Activated CD4-positive, alpha-beta T cell treated with anti-CD3 and anti-CD28 coated beads, Interleukin-2, amount 10 ng/mL, durations not matched to agents 24 days and 14 days (primary cell): ENCODE measurements at regions of chr1 and their contacts with region 1.

Region 1: DNA sequence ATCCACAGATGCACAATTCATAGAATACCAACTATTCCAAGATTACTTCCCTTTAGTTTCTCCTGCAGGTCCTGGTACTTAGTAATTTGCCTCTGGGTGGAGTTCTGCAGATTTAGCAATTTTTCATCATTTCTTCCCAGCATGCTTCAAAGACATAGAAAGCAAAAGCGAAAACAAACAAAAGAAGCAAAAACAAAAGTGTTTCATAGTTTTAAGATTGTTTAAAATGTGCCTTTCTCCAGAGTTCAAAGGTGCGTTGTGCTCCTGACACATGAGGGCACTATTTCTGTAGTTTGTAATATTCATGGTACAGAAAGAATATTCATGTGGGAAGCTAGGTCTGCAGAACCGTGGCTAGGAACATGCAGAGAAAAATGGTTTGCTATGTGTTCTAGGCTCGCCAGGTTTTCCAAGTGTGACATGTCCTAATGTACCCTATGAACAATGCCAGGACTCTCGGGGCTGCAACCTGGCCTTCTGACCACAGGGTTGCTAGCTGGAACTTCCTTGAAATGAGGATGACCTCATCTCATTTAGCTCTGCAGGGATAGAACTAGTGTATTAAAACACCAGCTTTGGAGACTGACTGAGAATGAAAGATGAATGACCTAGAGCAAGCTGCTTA is 30.0 kb upstream of the RCSD1 start:
- DNase-seq: peak; percentile 85
- H3K4me3 Mint-ChIP-seq: peak overlapping the region; percentile 72
- H3K27ac Mint-ChIP-seq: peak overlapping the region; percentile 85
- H3K4me1 Mint-ChIP-seq: peaks cover 40% of the 10 kb centered on the region
- H3K27me3 Mint-ChIP-seq: peaks cover 4% of the 10 kb centered on the region

Region 2: GRCh38 chr1:167617153-167618147 is 17.4 kb after region 1 on chr1:
- intact Hi-C with region 1: loop called (anchors 1 kb)
- DNase-seq: peak; percentile 78
- H3K4me3 Mint-ChIP-seq: peak overlapping the region; percentile 77
- H3K27ac Mint-ChIP-seq: peak overlapping the region; percentile 94
- H3K4me1 Mint-ChIP-seq: peaks cover 57% of the 10 kb centered on the region
- H3K27me3 Mint-ChIP-seq: no peaks in the 10 kb centered on the region

Region 3: GRCh38 chr1:167687919-167688519 is 88.0 kb after region 1 on chr1:
- intact Hi-C with region 1: loop called (anchors 1 kb)
- DNase-seq: peak; percentile 94
- H3K4me3 Mint-ChIP-seq: no peak overlapping the region
- H3K27ac Mint-ChIP-seq: peak overlapping the region; percentile 56
- H3K4me1 Mint-ChIP-seq: peaks cover 19% of the 10 kb centered on the region
- H3K27me3 Mint-ChIP-seq: no peaks in the 10 kb centered on the region

Region 4: GRCh38 chr1:167715157-167715999 is 115.3 kb after region 1 on chr1:
- intact Hi-C with region 1: loop called (anchors 1 kb)
- DNase-seq: peak; percentile 97
- H3K4me3 Mint-ChIP-seq: peak overlapping the region; percentile 96
- H3K27ac Mint-ChIP-seq: peak overlapping the region; percentile 98
- H3K4me1 Mint-ChIP-seq: peaks cover 56% of the 10 kb centered on the region
- H3K27me3 Mint-ChIP-seq: peaks cover 13% of the 10 kb centered on the region